ENCODE measurements at regions of chr10 and their contacts with region 1.

Region 1: GRCh38 chr10:97553575-97554031 is 19.0 kb upstream of the ANKRD2 start:
- DNase-seq: peak in 4 of 5 donors; percentile 36 to 47 (median 40)
- H3K4me3 ChIP-seq: no peak overlapping the region
- H3K4me3 Mint-ChIP-seq: no peak overlapping the region
- H3K27ac ChIP-seq: no peak overlapping the region
- H3K27ac Mint-ChIP-seq: no peak overlapping the region
- H3K4me1 ChIP-seq: no peaks in the 10 kb centered on the region
- H3K4me1 Mint-ChIP-seq: peaks cover 0 to 3% (median under 1%) of the 10 kb centered on the region in 4 donors
- H3K27me3 ChIP-seq: no peaks in the 10 kb centered on the region
- H3K27me3 Mint-ChIP-seq: no peaks in the 10 kb centered on the region

Region 2: GRCh38 chr10:97407211-97407951 is 146.2 kb before region 1 on chr10:
- CTCF ChIA-PET with region 1: interaction called, 98 read pairs
- POLR2A ChIA-PET with region 1: no interaction called
- intact Hi-C with region 1: loop called (anchors 1 kb)
- DNase-seq: peak; percentile 74 to 78 (median 77)
- H3K4me3 ChIP-seq: peak overlapping the region; percentile 35 to 48
- H3K4me3 Mint-ChIP-seq: peak overlapping the region in 7 of 8 donors; percentile 36 to 77 (median 74)
- H3K27ac ChIP-seq: no peak overlapping the region
- H3K27ac Mint-ChIP-seq: peak overlapping the region; percentile 54 to 88 (median 78)
- H3K4me1 ChIP-seq: peaks cover 6% of the 10 kb centered on the region
- H3K4me1 Mint-ChIP-seq: peaks cover 3 to 12% (median 9%) of the 10 kb centered on the region in 4 donors
- H3K27me3 ChIP-seq: no peaks in the 10 kb centered on the region
- H3K27me3 Mint-ChIP-seq: no peaks in the 10 kb centered on the region

Region 3: GRCh38 chr10:97463363-97464132 is 90.1 kb before region 1 on chr10:
- CTCF ChIA-PET with region 1: interaction called, 83 read pairs
- POLR2A ChIA-PET with region 1: no interaction called
- intact Hi-C with region 1: loop called (anchors 1 kb)
- DNase-seq: peak; percentile 31 to 52 (median 42)
- H3K4me3 ChIP-seq: no peak overlapping the region
- H3K4me3 Mint-ChIP-seq: no peak overlapping the region
- H3K27ac ChIP-seq: no peak overlapping the region
- H3K27ac Mint-ChIP-seq: peak overlapping the region; percentile 12 to 77 (median 37)
- H3K4me1 ChIP-seq: no peaks in the 10 kb centered on the region
- H3K4me1 Mint-ChIP-seq: peaks cover 0 to 2% (median 0%) of the 10 kb centered on the region in 4 donors
- H3K27me3 ChIP-seq: no peaks in the 10 kb centered on the region
- H3K27me3 Mint-ChIP-seq: no peaks in the 10 kb centered on the region

Region 4: DNA sequence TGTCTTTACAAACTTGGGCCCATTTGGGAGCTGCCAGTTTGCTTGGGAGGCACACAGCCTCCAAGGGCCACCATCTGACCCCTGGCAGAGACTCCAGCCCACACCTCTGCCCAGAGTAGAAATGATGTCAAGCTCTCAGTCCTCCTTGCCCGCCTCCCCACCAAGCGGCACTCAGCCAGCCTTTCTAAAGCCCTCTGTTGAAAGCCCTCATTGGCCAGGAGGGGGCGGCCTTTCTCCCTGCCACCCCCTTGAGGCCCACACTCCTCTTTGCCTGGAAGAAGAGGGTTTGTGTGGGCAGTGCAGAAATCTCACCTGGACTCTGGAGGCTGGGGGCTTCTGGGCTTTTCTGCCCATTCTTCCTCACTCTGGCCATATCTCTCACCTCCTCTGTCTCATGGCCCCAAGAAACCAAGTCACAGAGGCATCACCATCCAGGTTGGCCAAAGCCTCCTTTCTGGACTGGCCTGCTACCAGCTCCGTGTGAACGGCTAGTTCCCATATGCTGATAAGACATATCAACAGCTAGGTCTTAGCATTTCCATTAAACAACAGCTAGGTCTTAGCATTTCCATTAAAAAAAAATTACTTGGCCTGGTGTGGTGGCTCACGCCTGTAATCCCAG is 18.7 kb before region 1 on chr10:
- CTCF ChIA-PET with region 1: interaction called, 15 read pairs
- POLR2A ChIA-PET with region 1: no interaction called
- intact Hi-C with region 1: no loop called
- DNase-seq: no peak
- H3K4me3 ChIP-seq: no peak overlapping the region
- H3K4me3 Mint-ChIP-seq: no peak overlapping the region
- H3K27ac ChIP-seq: no peak overlapping the region
- H3K27ac Mint-ChIP-seq: no peak overlapping the region
- H3K4me1 ChIP-seq: no peaks in the 10 kb centered on the region
- H3K4me1 Mint-ChIP-seq: peaks cover 0 to 1% (median under 1%) of the 10 kb centered on the region in 4 donors
- H3K27me3 ChIP-seq: no peaks in the 10 kb centered on the region
- H3K27me3 Mint-ChIP-seq: no peaks in the 10 kb centered on the region

Region 5: DNA sequence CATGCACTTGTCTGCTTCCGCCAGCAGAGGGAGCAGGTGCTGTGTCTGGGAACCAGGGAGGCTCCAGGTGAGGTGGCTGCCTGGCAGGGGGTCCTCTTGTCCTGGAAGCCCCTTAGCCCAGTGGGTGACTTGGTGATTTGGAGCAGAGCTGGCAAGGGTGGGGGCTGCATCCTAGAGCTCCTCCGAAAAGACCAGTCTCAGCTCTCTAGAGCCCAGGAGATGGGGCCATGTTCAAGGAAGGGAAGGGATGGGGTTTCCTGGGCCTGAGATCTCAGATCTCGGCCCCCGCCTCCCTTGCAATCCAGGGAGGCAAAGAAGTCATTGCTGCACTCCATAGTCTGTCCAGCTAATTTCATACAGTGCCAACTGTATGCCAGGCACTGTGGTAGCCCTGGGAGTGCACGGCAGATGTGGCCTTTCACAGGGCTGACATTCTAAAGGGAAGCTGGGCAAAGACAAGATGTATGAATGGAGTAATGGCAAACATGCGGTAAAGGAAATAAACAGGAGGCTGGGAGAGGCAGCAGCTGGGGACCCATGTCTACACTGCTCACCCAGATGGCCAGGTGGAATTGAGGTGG is 238.6 kb after region 1 on chr10:
- CTCF ChIA-PET with region 1: no interaction called
- POLR2A ChIA-PET with region 1: no interaction called
- intact Hi-C with region 1: no loop called
- DNase-seq: peak; percentile 62 to 76 (median 65)
- H3K4me3 ChIP-seq: no peak overlapping the region
- H3K4me3 Mint-ChIP-seq: no peak overlapping the region
- H3K27ac ChIP-seq: no peak overlapping the region
- H3K27ac Mint-ChIP-seq: peak overlapping the region in 4 of 7 donors; percentile 42 to 52 (median 49)
- H3K4me1 ChIP-seq: peaks cover 31% of the 10 kb centered on the region
- H3K4me1 Mint-ChIP-seq: peaks cover 17 to 34% (median 23%) of the 10 kb centered on the region in 4 donors
- H3K27me3 ChIP-seq: no peaks in the 10 kb centered on the region
- H3K27me3 Mint-ChIP-seq: peaks cover 2% of the 10 kb centered on the region in 2 donors

Measured in CD4-positive, alpha-beta memory T cell (primary cell).